Prostate gland (tissue), 2 donors: ENCODE measurements at regions of chr6 and their contacts with region 1.

Region 1: GRCh38 chr6:21664314-21665109 is 71.0 kb downstream of the SOX4 start:
- DNase-seq: peak; percentile 20
- H3K4me3 ChIP-seq: peak overlapping the region; percentile 36 to 37
- H3K27ac ChIP-seq: peak overlapping the region; percentile 57
- H3K4me1 ChIP-seq: no peaks in the 10 kb centered on the region
- H3K27me3 ChIP-seq: no peaks in the 10 kb centered on the region
- CTCF ChIP-seq: no peak
- POLR2A ChIP-seq: no peak

Region 2: GRCh38 chr6:21240709-21241108 is 423.8 kb before region 1 on chr6:
- intact Hi-C with region 1: no loop called
- DNase-seq: no peak
- H3K4me3 ChIP-seq: no peak overlapping the region
- H3K27ac ChIP-seq: no peak overlapping the region
- H3K4me1 ChIP-seq: no peaks in the 10 kb centered on the region
- H3K27me3 ChIP-seq: no peaks in the 10 kb centered on the region
- CTCF ChIP-seq: no peak
- POLR2A ChIP-seq: no peak

Region 3: GRCh38 chr6:21455071-21455470 is 209.4 kb before region 1 on chr6:
- intact Hi-C with region 1: no loop called
- DNase-seq: no peak
- H3K4me3 ChIP-seq: no peak overlapping the region
- H3K27ac ChIP-seq: no peak overlapping the region
- H3K4me1 ChIP-seq: no peaks in the 10 kb centered on the region
- H3K27me3 ChIP-seq: no peaks in the 10 kb centered on the region
- CTCF ChIP-seq: no peak
- POLR2A ChIP-seq: no peak

Region 4: DNA sequence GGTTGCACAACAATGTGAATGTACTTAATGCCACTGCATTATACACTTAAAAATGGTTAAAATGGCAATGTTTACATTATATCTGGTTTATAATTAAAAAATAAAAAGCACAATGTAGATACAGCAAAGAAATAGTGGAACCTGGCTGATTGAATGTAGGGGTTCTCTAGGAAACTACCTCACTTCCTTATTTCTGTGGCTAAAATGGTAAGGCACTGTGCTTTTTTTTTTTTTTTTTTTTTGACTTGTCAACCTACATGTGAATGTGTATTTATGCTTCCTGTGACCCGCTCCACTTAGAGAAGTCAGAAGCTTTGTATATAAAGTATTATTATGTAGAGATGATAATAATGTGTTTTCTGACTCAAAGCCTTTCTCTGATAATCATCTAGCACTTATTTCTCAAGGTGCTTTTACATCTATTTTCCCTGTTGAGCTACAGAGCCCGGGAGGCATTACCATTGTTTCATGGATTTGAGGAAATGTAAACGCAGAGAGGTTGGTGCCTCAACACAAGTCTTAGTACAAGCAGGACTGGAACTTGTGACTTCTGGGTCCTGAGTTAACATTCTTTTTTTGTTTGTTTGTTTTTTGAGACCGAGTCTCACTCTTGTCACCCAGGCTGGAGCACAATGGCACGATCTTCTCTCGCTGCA is 15.9 kb before region 1 on chr6:
- intact Hi-C with region 1: no loop called
- DNase-seq: no peak
- H3K4me3 ChIP-seq: no peak overlapping the region
- H3K27ac ChIP-seq: no peak overlapping the region
- H3K4me1 ChIP-seq: no peaks in the 10 kb centered on the region
- H3K27me3 ChIP-seq: no peaks in the 10 kb centered on the region
- CTCF ChIP-seq: no peak
- POLR2A ChIP-seq: no peak

Region 5: DNA sequence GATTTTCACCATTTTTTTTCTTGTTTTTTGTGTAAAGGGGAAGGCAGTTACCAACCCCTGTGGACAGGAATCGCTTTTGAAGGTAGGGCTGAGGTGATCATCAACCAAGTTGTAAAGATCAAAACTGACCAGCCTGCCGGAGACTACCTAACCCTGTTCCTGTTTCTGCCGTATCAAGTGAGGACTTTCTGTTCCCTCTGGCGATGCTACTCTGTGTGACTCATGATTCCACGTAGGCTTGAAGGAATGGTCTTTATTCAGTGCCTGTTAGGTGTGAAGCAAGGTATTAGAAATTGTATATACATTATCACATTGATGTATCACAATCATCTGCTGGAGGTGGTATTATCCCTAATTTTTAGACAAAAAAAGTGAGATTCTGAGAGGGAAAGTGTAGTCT is 90.4 kb after region 1 on chr6:
- intact Hi-C with region 1: loop called (anchors 5 kb)
- DNase-seq: no peak
- H3K4me3 ChIP-seq: no peak overlapping the region
- H3K27ac ChIP-seq: peak overlapping the region in 1 of 2 donors; percentile 12
- H3K4me1 ChIP-seq: no peaks in the 10 kb centered on the region
- H3K27me3 ChIP-seq: no peaks in the 10 kb centered on the region
- CTCF ChIP-seq: no peak
- POLR2A ChIP-seq: no peak

Region 6: GRCh38 chr6:21935561-21936028 is 271.1 kb after region 1 on chr6:
- intact Hi-C with region 1: loop called (anchors 10 kb)
- DNase-seq: no peak
- H3K4me3 ChIP-seq: no peak overlapping the region
- H3K27ac ChIP-seq: no peak overlapping the region
- H3K4me1 ChIP-seq: no peaks in the 10 kb centered on the region
- H3K27me3 ChIP-seq: no peaks in the 10 kb centered on the region
- CTCF ChIP-seq: peak in 2 of 4 experiments; percentile 30
- POLR2A ChIP-seq: no peak

Region 7: GRCh38 chr6:22145823-22146677 is 481.5 kb after region 1 on chr6:
- intact Hi-C with region 1: loop called (anchors 5 kb)
- DNase-seq: no peak
- H3K4me3 ChIP-seq: no peak overlapping the region
- H3K27ac ChIP-seq: no peak overlapping the region
- H3K4me1 ChIP-seq: no peaks in the 10 kb centered on the region
- H3K27me3 ChIP-seq: no peaks in the 10 kb centered on the region
- CTCF ChIP-seq: peak in 2 of 4 experiments; percentile 37 to 41
- POLR2A ChIP-seq: no peak